ENCODE measurements at regions of chr9 and their contacts with region 1.

Region 1: DNA sequence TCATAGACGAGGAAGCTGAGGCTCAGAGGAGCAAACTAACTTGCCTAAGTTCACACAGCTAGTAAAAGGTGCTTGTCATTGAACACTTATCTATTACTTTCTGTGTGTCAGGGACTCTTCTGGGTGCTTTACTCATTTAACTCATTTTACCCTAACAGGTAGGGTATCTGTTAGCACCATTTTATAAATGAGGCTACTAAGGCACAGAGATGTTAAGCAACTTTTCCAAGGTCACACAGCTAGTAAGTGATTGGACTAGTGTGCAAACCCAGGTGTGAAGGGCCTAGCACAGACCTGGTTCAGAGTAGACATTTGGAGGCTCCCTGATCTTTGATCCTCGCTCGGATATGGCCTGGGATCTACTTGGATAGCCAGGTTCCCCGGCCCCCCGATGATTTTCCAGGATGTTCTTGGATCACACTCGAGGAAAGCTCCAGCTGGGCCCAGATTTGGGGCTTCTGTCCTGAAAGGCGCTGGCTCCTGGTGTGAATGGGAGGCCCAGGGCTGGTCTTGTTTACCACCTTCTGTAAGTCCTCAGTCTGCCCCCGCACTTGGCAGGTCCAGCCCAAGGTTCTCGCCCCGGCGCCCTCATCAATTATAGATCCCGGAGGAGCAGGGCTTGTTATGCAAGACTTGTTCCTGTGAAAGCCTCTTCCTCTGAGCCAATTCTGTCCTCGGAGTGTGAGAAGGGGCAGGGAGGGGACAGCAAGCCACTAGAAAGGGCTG is 37.5 kb downstream of the GSN start:
- DNase-seq: peak in 1 of 3 donors; percentile 40
- ATAC-seq: peak; percentile 7 to 77 (median 52)
- H3K4me3 ChIP-seq: no peak overlapping the region
- H3K27ac ChIP-seq: no peak overlapping the region
- H3K4me1 ChIP-seq: peaks cover 0 to 4% (median 0%) of the 10 kb centered on the region in 4 donors
- H3K27me3 ChIP-seq: no peaks in the 10 kb centered on the region
- CTCF ChIP-seq: no peak
- POLR2A ChIP-seq: no peak

Region 2: DNA sequence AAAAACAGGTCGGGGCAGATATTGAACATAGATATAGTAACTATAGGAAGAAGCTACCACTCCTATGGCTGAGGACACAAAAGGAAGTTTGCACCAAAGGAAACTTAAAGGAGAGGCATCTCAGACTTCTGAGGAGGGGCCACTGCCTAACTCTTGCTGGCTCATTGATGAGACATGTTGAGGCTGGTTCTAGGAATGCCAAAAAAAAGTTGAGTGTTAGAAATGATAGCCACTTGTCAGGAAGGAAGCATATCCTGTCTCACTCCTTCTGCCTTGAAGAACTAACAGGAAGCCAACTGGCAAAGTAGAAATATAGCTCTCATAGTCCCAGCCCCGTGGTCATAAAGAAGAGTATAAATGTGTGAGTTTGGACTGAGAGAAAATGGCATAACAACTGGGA is 87.9 kb after region 1 on chr9:
- intact Hi-C with region 1: loop called in 1 of 2 experiments (anchors 5 kb)
- DNase-seq: no peak
- ATAC-seq: no peak
- H3K4me3 ChIP-seq: no peak overlapping the region
- H3K27ac ChIP-seq: no peak overlapping the region
- H3K4me1 ChIP-seq: no peaks in the 10 kb centered on the region
- H3K27me3 ChIP-seq: no peaks in the 10 kb centered on the region
- CTCF ChIP-seq: no peak
- POLR2A ChIP-seq: no peak